Activated CD8-positive, alpha-beta T cell treated with anti-CD3 and anti-CD28 coated beads, Interleukin-2, amount 10 ng/mL, durations not matched to agents 7 days and 5 days (primary cell): ENCODE measurements at regions of chr12 and their contacts with region 1.

Region 1: GRCh38 chr12:12334367-12335040 is 15.5 kb downstream of the MANSC1 start:
- DNase-seq: peak; percentile 76
- ATAC-seq: peak; percentile 84
- H3K4me3 Mint-ChIP-seq: no peak overlapping the region
- H3K27ac Mint-ChIP-seq: peak overlapping the region; percentile 1
- H3K4me1 Mint-ChIP-seq: peaks cover 24% of the 10 kb centered on the region
- H3K27me3 Mint-ChIP-seq: peaks cover 12% of the 10 kb centered on the region

Region 2: GRCh38 chr12:12081836-12082497 is 252.5 kb before region 1 on chr12:
- CTCF ChIA-PET with region 1: interaction called, 30 read pairs
- POLR2A ChIA-PET with region 1: no interaction called
- DNase-seq: no peak
- ATAC-seq: peak; percentile 36
- H3K4me3 Mint-ChIP-seq: no peak overlapping the region
- H3K27ac Mint-ChIP-seq: no peak overlapping the region
- H3K4me1 Mint-ChIP-seq: peaks cover 4% of the 10 kb centered on the region
- H3K27me3 Mint-ChIP-seq: no peaks in the 10 kb centered on the region

Region 3: GRCh38 chr12:12349711-12350665 is 15.5 kb after region 1 on chr12 and contains the start of gene MANSC1:
- CTCF ChIA-PET with region 1: interaction called, 36 read pairs
- POLR2A ChIA-PET with region 1: interaction called, 3 read pairs
- DNase-seq: peak; percentile 67
- ATAC-seq: peak; percentile 78
- H3K4me3 Mint-ChIP-seq: peak within 1 kb of the TSS; percentile 68
- H3K27ac Mint-ChIP-seq: peak within 1 kb of the TSS; percentile 47
- H3K4me1 Mint-ChIP-seq: peaks cover 21% of the 10 kb centered on the region
- H3K27me3 Mint-ChIP-seq: peaks cover 4% of the 10 kb centered on the region
- total RNA-seq, gene MANSC1: 0.13 TPM in 1 of 2 experiments, not detected in the other

Region 4: DNA sequence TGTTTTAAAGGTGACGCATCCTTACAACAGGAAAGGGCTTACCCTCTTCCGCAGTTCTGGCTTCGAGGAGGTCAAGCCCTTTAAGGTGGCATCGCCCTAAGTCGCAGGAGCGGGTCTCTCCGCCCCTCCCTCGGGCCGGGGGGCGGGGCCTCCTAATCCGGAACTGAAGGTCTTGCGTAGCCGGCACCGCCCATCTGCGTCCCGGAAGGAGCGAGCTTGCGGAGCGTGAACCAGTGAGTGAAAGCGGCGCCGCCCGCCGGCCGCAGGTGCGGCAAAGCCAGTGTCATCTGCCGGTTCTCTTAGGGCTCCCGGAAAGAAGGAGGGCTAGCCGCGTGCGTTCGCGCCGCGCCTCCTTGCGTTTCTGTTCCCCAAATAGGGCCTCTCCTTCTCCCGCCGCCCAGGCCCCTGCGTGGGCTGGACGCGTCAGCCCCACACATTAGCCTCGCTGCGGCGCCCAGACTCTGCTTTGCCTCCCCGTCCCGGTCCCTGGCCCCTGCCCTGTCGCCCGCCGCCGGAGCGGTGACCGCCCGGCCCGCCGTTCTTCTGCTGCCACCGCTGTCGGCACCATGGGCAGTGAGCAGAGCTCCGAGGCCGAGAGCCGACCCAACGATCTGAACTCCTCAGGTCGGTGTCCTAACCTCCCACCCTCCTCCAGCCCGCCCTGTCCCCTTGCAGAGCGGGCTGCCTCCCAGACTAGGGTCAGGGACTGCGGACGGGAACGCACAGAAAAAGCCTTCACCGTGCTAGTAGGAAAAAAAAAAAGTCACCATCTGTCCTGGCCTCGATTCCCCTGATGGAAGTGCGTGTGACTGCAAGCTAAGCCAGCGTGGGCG is 22.6 kb after region 1 on chr12 and contains the start of gene BORCS5:
- CTCF ChIA-PET with region 1: interaction called, 16 read pairs
- POLR2A ChIA-PET with region 1: interaction called, 7 read pairs
- DNase-seq: peak; percentile 99
- ATAC-seq: peak; percentile 94
- H3K4me3 Mint-ChIP-seq: peak within 1 kb of the TSS; percentile 88
- H3K27ac Mint-ChIP-seq: peak within 1 kb of the TSS; percentile 94
- H3K4me1 Mint-ChIP-seq: peaks cover 48% of the 10 kb centered on the region
- H3K27me3 Mint-ChIP-seq: no peaks in the 10 kb centered on the region
- total RNA-seq, gene BORCS5: 18.8 to 21.2 TPM